HEK293T (cell line): ENCODE measurements at regions of chr18 and their contacts with region 1.

Region 1: GRCh38 chr18:74353169-74353775 is 37.6 kb downstream of the C18orf63 start:
- DNase-seq: peak; percentile 36

Region 2: DNA sequence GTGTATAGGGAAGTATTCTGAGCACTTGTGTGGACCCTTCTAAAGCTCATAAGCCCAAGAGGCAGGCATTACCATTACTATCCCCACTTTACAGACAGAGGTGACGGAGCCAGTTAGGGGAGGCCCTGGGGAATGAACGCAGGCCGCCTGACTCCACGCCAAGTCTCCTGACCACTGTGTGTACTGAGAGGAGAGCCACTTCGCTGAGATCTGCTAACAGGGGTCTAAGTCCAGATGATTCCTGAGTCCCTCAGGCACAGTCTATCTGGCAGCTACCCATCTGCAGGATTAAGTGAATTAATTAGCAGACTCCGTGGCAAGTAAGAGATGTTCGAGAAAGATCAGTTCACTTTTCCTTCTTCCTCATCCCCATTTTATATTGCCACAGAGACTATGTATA is 75.2 kb before region 1 on chr18:
- CTCF ChIA-PET with region 1: no interaction called
- POLR2A ChIA-PET with region 1: no interaction called
- DNase-seq: no peak

Region 3: DNA sequence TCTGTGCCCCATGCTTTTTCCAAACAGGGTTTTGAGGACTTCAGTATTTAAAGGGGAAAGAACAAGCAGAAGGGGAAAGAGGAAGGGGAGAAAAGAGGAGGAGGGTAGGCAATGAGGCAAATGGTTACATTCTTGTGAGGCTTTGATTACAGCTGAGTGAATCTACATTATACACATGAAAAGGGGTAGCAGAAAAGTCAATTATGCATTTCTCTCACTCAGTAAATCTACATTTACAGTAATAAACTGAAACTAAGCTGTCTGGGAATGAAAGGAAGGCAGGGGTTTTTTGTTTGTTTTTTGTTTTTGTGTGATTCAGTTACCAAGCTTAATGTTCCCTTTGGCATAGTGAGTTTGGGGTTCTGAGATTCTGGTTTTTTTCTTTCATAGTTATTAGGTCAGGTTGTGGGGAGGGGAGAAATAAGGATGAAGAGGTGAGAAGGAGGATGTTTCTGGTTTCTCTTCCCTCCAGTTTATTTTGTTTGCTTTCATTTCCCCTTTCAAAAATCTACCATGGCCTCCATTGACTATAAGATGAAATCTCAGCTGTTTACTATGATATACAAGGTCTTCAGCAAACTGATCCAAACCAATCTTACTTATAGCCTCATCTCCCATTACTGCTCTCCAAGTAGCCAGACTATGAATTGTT is 18.9 kb before region 1 on chr18:
- CTCF ChIA-PET with region 1: no interaction called
- POLR2A ChIA-PET with region 1: no interaction called
- DNase-seq: no peak

Region 4: GRCh38 chr18:74493689-74494088 is 140.4 kb after region 1 on chr18:
- CTCF ChIA-PET with region 1: interaction called, 13 read pairs
- POLR2A ChIA-PET with region 1: interaction called, 3 read pairs
- DNase-seq: peak; percentile 13

Region 5: DNA sequence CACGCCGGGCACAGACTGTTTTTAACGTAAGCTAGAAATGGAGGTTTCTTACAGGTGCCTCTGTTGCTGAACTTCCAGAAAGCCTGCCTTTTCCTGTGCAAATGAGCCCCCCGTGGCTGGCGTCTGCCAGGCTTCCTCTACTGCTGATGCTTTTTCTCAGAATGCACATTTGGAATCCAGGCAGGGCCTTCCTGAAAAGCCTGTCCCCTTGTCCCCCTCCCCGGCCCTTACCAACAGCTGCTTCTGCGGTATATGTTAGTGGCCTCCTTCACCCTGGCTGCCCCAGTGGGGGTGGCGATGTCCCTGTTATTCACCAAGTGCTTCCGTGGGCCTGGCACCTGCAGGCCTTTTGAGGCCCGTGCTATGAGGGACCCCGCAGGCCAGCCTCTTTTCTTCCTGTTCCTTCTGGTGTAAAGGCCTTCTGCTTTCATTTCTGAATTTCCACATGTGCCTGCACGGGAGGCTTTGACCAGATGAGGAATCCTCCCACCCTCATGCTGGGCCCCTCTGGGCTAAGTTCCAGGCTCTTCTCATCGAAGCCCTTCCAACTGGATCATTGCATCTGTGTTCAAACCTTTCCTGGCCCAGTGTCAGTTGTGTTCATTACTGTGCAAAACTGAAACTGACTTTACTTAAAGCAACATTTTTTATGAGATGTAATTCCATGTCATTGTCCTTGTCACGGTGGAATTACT is 153.3 kb after region 1 on chr18:
- CTCF ChIA-PET with region 1: no interaction called
- POLR2A ChIA-PET with region 1: no interaction called
- DNase-seq: no peak

Region 6: GRCh38 chr18:74551936-74552555 is 198.8 kb after region 1 on chr18:
- CTCF ChIA-PET with region 1: interaction called, 22 read pairs
- POLR2A ChIA-PET with region 1: no interaction called
- DNase-seq: peak; percentile 70